CD4-positive, alpha-beta memory T cell (primary cell): ENCODE measurements at regions of chr14 and their contacts with region 1.

Region 1: GRCh38 chr14:71138448-71139293 is 231.4 kb downstream of the PCNX1 start:
- DNase-seq: peak; percentile 40 to 58 (median 48)
- H3K4me3 ChIP-seq: no peak overlapping the region
- H3K4me3 Mint-ChIP-seq: no peak overlapping the region
- H3K27ac ChIP-seq: no peak overlapping the region
- H3K27ac Mint-ChIP-seq: peak overlapping the region in 1 of 7 donors; percentile 10
- H3K4me1 ChIP-seq: peaks cover 25% of the 10 kb centered on the region
- H3K4me1 Mint-ChIP-seq: peaks cover 14 to 23% (median 22%) of the 10 kb centered on the region in 4 donors
- H3K27me3 ChIP-seq: no peaks in the 10 kb centered on the region
- H3K27me3 Mint-ChIP-seq: peaks cover 0 to 3% of the 10 kb centered on the region in 2 donors

Region 2: DNA sequence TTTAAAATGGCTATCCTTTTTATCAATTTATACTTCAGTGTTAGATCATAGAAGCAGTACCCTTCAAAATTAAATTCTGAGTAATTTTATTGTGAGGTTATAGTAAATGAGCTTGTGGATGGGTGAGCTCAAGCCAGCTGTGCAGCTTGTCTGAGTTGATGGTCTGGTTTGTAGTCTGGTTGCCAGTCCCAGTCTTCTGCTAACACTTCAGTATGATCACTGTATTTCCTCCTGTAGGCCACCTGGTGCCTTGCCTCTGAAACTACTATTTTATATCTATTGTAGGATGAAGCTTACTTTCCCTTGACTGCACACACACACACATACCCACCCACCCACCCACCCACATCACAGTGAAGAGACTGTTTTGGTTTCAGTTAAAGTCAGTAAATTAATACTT is 265.0 kb after region 1 on chr14:
- CTCF ChIA-PET with region 1: interaction called, 8 read pairs
- POLR2A ChIA-PET with region 1: no interaction called
- intact Hi-C with region 1: loop called (anchors 5 kb)
- DNase-seq: peak in 3 of 5 donors; percentile 33 to 47 (median 36)
- H3K4me3 ChIP-seq: no peak overlapping the region
- H3K4me3 Mint-ChIP-seq: no peak overlapping the region
- H3K27ac ChIP-seq: no peak overlapping the region
- H3K27ac Mint-ChIP-seq: peak overlapping the region in 3 of 7 donors; percentile 43 to 59 (median 49)
- H3K4me1 ChIP-seq: peaks cover 16% of the 10 kb centered on the region
- H3K4me1 Mint-ChIP-seq: peaks cover 22 to 34% (median 24%) of the 10 kb centered on the region in 4 donors
- H3K27me3 ChIP-seq: no peaks in the 10 kb centered on the region
- H3K27me3 Mint-ChIP-seq: no peaks in the 10 kb centered on the region

Region 3: DNA sequence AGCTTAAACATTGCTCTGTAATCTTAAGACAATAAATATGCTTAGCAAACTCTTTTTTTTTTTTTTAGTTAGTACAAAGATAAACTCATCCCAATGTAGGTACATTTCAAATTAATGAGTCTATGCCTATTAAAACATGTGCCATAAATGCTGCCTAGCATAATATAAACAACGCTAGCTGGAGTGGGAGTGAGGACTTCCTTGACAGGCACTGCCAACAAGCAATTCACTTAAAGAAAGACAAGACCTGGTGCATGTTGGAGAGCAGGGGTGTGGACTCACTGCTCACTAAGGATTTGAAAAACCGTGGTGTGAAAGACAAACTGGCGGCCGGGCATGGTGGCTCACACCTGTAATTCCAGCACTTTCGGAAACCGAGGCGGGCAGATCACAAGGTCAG is 606.4 kb after region 1 on chr14:
- CTCF ChIA-PET with region 1: interaction called, 235 read pairs
- POLR2A ChIA-PET with region 1: no interaction called
- intact Hi-C with region 1: no loop called
- DNase-seq: no peak
- H3K4me3 ChIP-seq: no peak overlapping the region
- H3K4me3 Mint-ChIP-seq: no peak overlapping the region
- H3K27ac ChIP-seq: no peak overlapping the region
- H3K27ac Mint-ChIP-seq: no peak overlapping the region
- H3K4me1 ChIP-seq: no peaks in the 10 kb centered on the region
- H3K4me1 Mint-ChIP-seq: peaks cover 0 to 1% (median 0%) of the 10 kb centered on the region in 4 donors
- H3K27me3 ChIP-seq: no peaks in the 10 kb centered on the region
- H3K27me3 Mint-ChIP-seq: peaks cover 2 to 4% of the 10 kb centered on the region in 2 donors

Region 4: GRCh38 chr14:71855399-71856036 is 716.8 kb after region 1 on chr14:
- CTCF ChIA-PET with region 1: interaction called, 14 read pairs
- POLR2A ChIA-PET with region 1: no interaction called
- intact Hi-C with region 1: no loop called
- DNase-seq: peak in 3 of 5 donors; percentile 8 to 21 (median 9)
- H3K4me3 ChIP-seq: no peak overlapping the region
- H3K4me3 Mint-ChIP-seq: no peak overlapping the region
- H3K27ac ChIP-seq: no peak overlapping the region
- H3K27ac Mint-ChIP-seq: no peak overlapping the region
- H3K4me1 ChIP-seq: no peaks in the 10 kb centered on the region
- H3K4me1 Mint-ChIP-seq: peaks cover 0 to 5% (median 2%) of the 10 kb centered on the region in 4 donors
- H3K27me3 ChIP-seq: peaks cover 5% of the 10 kb centered on the region
- H3K27me3 Mint-ChIP-seq: peaks cover 39 to 53% of the 10 kb centered on the region in 2 donors